Left ventricle myocardium inferior (tissue), 1 donor: ENCODE measurements at regions of chr2 and their contacts with region 1.

Region 1: DNA sequence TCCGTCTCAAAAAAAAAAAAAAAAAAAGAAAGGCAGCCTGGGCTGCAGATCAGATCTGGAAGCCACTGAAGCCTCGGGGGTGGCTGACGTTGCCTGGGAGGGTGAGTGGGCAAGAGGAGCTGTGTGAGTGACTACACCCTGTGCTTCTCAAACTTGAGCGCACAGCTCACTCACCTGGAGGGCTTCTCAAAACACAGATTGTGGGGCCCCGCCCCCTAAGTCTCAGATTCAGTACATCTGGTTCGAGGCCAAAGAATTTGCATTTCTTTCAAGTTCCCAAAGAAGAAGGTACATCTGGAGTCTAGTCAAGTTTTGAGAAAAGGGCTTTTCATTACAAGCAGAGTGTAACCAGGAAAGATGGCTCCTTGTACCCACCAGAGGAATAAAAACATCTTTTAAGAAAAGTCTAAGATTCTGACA is 97.7 kb upstream of the CAB39 start:
- DNase-seq: no peak
- H3K4me3 ChIP-seq: no peak overlapping the region
- H3K27ac ChIP-seq: no peak overlapping the region
- H3K4me1 ChIP-seq: peaks cover 3% of the 10 kb centered on the region
- H3K27me3 ChIP-seq: no peaks in the 10 kb centered on the region
- CTCF ChIP-seq: no peak

Region 2: GRCh38 chr2:230007931-230008707 is 606.8 kb before region 1 on chr2:
- intact Hi-C with region 1: loop called (anchors 5 kb)
- DNase-seq: peak; percentile 69
- H3K4me3 ChIP-seq: peak overlapping the region; percentile 30
- H3K27ac ChIP-seq: no peak overlapping the region
- H3K4me1 ChIP-seq: peaks cover 6% of the 10 kb centered on the region
- H3K27me3 ChIP-seq: no peaks in the 10 kb centered on the region
- CTCF ChIP-seq: peak; percentile 87